PC-3 (cell line): ENCODE measurements at regions of chr10 and their contacts with region 1.

Region 1: DNA sequence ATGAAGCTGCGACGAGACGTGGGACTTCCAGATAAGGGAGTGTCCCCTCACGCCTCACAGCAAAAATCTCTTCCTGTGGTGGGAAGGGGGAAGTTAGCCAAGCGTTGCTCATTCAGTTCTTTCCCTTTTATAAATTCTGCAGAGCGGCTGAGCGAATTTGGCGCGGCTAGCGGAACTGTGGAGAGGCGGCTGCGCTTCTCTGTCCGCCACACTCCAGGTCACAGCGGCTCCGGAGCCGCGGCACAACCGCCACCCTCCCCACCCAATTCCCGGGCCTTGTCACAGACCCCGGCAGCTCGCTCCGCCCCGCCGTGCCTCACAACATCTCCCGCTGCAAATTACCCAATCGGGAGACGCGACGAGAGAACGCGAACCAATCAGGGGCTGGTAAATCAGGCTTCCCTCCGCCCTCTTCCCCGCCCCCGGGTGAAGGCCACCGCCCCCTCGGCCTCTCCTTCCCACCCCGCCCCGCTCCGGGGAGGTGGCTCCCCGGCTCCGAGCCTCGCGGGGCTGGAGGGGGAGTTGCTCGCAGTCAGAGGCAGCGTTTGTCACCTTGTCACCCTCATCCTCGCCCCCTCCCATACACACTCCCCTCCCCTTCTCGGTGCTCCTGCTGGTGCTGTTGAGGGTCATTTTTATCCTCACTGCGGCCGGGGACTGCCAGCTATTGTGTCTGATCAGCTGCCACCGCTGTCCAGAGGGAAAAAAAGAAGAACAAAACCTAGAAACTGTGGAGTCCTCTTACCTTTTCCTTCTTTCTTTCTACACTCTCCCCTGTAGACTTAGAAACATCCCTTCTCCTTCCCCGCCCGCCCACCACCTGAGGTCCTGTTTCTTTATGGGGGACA is 918 bp upstream of the ARHGAP21 start:
- DNase-seq: peak; percentile 94
- ATAC-seq: peak; percentile 73
- H3K4me3 ChIP-seq: peak overlapping the region; percentile 94
- H3K27ac ChIP-seq: peak overlapping the region; percentile 72
- H3K4me1 ChIP-seq: 0 out of 2 replicates have a peak, but pooled peaks cover 4% of the 10 kb centered on the region
- H3K27me3 ChIP-seq: no peaks in the 10 kb centered on the region
- CTCF ChIP-seq: no peak

Region 2: DNA sequence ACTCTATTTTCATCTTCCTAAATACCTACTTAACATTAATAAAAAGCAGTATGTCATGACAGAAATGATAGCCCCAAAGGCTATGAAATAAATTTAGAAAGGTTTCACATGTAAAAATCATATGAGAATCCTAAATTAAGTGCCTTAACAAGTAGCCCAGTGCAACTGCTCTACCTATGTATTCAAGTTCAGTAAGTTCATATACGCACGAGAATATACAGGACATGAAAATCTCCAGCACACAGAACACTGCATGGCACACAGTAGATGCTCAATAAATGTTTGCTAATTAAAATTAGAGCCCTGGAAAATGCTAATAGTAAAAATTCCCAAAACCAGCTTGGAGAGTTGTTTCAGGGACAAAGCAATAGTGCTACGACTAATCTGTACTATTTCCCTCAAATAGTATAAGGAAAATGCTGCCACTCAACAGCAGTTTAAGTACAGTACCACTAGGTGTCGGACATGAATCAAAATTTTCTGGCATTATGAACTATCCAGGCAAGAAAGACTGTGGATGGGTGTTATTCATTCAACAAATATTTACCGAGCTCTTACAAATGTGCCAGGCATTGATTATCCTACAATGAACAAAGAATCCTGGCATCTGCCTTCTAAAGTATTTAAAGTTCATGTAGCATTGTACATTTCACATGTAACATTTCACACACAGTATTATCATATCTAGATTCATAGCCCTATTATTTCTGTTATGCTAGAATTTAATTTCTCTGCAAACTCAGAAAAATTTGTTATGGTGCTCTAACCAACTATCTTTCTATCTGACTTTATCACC is 81.8 kb before region 1 on chr10:
- CTCF ChIA-PET with region 1: no interaction called
- POLR2A ChIA-PET with region 1: no interaction called
- intact Hi-C with region 1: loop called (anchors 1 kb)
- DNase-seq: peak; percentile 88
- ATAC-seq: peak; percentile 72
- H3K4me3 ChIP-seq: no peak overlapping the region
- H3K27ac ChIP-seq: peak overlapping the region; percentile 64
- H3K4me1 ChIP-seq: peaks cover 34% of the 10 kb centered on the region
- H3K27me3 ChIP-seq: no peaks in the 10 kb centered on the region
- CTCF ChIP-seq: peak; percentile 83

Region 3: DNA sequence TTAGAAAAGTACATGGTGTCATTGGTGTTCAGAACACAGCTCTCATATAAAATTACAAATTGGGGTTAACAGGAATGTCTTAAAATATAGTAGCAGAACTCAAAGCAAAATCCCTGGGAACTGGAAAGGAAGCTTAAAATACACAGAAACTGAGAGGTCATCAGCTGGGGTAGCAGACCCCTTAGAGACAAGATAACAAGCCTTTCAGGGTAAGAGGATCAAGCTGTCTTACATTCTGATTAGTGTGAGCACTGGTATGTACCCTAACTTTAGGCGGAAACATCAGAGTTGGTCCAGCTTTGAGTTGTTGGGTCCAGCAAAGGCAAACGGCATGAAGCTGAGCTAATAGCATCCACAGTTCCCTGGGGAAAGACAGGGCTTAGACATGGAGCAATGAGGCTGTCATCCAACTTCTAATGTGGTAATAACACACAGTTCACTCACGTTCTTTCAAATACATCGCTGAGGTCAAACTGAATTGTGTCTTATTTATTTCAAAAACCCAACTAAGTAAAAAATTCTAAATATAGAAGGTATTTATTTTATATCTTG is 33.6 kb before region 1 on chr10:
- CTCF ChIA-PET with region 1: no interaction called
- POLR2A ChIA-PET with region 1: no interaction called
- intact Hi-C with region 1: no loop called
- DNase-seq: no peak
- ATAC-seq: no peak
- H3K4me3 ChIP-seq: no peak overlapping the region
- H3K27ac ChIP-seq: no peak overlapping the region
- H3K4me1 ChIP-seq: no peaks in the 10 kb centered on the region
- H3K27me3 ChIP-seq: no peaks in the 10 kb centered on the region
- CTCF ChIP-seq: no peak

Region 4: GRCh38 chr10:24706479-24707118 is 18.0 kb before region 1 on chr10:
- CTCF ChIA-PET with region 1: no interaction called
- POLR2A ChIA-PET with region 1: no interaction called
- intact Hi-C with region 1: no loop called
- DNase-seq: peak; percentile 89
- ATAC-seq: peak; percentile 99
- H3K4me3 ChIP-seq: peak overlapping the region; percentile 10; the same call in 1 of the 2 replicates
- H3K27ac ChIP-seq: peak overlapping the region; percentile 78
- H3K4me1 ChIP-seq: peaks cover 32% of the 10 kb centered on the region
- H3K27me3 ChIP-seq: no peaks in the 10 kb centered on the region
- CTCF ChIP-seq: no peak

Region 5: DNA sequence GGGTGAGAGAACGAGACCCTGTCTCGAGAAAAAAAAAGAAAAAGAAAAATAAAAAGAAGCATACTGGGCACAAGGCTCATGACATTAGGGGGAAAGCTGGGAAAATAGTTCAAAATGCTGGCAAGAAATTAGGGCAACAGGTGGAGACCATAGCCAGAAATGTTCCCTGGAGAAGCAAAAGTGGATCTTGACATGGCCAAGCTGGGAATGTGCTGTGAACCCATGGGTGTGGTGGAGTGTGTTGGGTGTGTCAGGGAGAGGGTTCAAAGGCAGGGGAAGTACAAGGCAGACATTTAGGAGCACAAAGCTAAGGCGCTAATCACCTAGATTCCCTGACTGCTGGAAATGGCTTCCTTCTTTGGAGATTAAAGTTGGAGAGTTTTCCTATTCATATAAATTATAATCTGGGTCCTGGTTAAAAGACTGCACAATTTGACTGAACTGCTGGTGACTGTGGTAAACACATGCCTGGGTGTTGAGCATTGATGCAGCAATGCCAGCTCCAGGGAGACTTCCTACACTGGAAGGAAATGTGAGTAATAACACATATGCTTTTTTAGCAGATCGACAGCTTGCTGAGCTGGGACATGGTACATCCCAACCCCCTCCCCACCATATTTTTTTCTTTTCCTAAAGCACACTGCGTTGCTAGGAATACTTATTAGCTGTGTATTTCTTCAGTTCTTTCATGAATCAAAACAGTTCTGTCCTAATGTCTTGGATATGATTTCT is 69.2 kb after region 1 on chr10:
- CTCF ChIA-PET with region 1: no interaction called
- POLR2A ChIA-PET with region 1: no interaction called
- intact Hi-C with region 1: no loop called
- DNase-seq: no peak
- ATAC-seq: no peak
- H3K4me3 ChIP-seq: no peak overlapping the region
- H3K27ac ChIP-seq: no peak overlapping the region
- H3K4me1 ChIP-seq: no peaks in the 10 kb centered on the region
- H3K27me3 ChIP-seq: no peaks in the 10 kb centered on the region
- CTCF ChIP-seq: no peak

Region 6: DNA sequence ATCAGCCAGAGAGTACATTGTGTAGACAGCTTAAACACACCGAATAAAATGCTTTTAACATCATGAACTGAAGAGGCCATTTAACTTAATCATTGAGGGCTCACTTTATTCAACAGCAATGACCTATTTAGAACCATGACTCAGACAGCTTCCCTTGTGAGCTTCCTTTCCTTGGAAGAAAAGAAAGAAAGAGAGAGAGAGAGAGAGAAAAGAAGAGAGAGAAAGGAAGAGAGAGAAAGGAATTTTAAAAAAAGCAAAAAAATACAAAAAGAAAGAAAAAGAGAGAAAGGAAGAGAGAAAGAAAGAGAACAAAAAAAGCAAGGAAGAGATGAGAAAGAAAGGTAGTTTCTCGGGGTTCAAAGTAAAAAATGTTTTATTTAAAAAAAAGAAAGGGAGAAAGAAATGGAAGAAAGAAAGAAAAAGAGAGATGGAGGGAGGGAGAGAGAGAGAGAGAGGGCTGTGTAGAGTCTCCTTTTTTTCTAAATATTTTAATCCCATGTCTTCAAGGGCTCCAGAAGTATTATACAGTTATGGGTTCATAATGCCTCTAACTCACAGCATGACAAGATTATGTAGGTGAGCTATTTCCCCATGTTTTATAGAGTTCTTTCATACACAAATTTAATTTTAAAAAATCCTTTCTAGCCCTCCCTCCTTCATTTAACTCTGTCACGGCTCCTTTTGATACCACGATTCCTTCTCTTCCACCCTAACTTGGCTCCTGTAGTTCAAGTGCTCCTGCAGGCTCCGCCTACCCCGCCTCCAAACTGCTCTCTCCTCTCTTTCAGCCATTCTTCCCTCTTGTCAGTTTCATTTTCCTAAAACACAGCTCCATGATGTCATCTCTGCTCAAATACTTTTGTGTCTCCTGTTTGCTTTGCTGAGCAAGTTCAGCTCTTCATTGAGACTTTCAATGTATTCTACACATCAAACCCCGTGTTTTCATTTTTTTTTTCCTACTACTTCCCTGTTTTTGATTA is 142.3 kb after region 1 on chr10:
- CTCF ChIA-PET with region 1: no interaction called
- POLR2A ChIA-PET with region 1: no interaction called
- intact Hi-C with region 1: loop called (anchors 5 kb)
- DNase-seq: peak; percentile 57
- ATAC-seq: peak; percentile 41
- H3K4me3 ChIP-seq: no peak overlapping the region
- H3K27ac ChIP-seq: peak overlapping the region; percentile 34
- H3K4me1 ChIP-seq: peaks cover 45% of the 10 kb centered on the region
- H3K27me3 ChIP-seq: no peaks in the 10 kb centered on the region
- CTCF ChIP-seq: no peak

Region 7: DNA sequence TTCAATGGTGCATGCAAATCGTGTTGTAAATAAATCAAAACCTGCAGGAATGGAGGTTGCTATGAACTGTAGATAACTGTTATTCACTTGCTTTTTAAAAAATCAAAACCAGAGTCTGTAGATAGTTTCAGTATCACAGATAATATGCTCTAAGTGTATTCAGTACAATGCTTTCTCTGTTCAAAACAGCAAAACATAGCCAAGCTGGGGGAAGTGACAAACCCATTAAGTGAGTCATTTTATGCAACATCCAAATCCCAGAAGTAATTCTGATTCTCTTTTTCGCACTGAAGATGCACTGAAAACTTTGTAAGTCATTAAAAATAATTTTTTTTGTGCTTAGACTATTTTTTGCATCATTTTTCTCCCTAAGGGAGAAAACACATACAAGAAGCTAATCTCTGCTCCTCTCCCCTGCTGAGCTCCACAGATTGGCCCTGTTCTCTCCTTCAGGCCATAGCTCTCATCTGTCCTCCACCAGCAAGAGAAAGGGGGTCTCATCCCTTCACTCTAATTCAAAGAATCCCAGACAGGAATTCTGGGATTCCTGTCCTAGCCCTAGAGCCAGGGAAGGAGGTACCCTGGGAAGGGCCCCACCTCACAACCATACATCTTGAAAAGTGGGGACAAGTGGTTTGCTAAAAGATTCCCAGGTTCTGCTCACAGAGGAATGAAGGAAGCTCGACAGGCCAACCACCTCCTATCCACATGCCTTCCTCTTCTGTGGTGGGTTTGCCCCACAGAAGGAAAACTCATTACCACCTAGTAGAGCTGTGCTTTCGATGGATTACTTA is 222.9 kb after region 1 on chr10:
- CTCF ChIA-PET with region 1: interaction called, 4 read pairs
- POLR2A ChIA-PET with region 1: no interaction called
- intact Hi-C with region 1: loop called (anchors 2 kb)
- DNase-seq: peak; percentile 67
- ATAC-seq: peak; percentile 71
- H3K4me3 ChIP-seq: no peak overlapping the region
- H3K27ac ChIP-seq: peak overlapping the region; percentile 83
- H3K4me1 ChIP-seq: peaks cover 42% of the 10 kb centered on the region
- H3K27me3 ChIP-seq: no peaks in the 10 kb centered on the region
- CTCF ChIP-seq: no peak

Region 8: DNA sequence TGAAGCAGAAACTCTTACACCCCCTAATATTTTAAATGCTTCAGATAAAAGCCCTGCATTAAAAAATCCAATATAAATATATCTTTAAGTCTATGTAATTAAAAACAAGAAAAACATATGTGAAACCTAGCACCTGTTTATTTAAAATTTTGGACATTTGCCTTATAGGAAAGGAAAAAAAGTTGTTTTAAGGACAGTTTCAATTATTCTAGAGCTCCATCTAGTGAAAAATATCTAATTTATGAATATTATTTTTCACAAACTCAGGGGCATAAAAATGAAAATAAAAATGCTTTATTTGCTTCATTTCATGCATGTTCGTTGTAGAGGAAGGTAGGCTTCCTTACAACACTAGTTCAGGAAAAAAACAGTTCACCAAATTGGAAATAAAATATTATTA is 265.3 kb after region 1 on chr10:
- CTCF ChIA-PET with region 1: interaction called, 4 read pairs
- POLR2A ChIA-PET with region 1: no interaction called
- intact Hi-C with region 1: loop called (anchors 1 kb)
- DNase-seq: peak; percentile 39
- ATAC-seq: no peak; the same call in 1 of the 2 replicates
- H3K4me3 ChIP-seq: no peak overlapping the region
- H3K27ac ChIP-seq: no peak overlapping the region
- H3K4me1 ChIP-seq: 0 out of 2 replicates have a peak, but pooled peaks cover 8% of the 10 kb centered on the region
- H3K27me3 ChIP-seq: no peaks in the 10 kb centered on the region
- CTCF ChIP-seq: peak; percentile 55